ENCODE measurements at regions of chr20 and their contacts with region 1.

Region 1: DNA sequence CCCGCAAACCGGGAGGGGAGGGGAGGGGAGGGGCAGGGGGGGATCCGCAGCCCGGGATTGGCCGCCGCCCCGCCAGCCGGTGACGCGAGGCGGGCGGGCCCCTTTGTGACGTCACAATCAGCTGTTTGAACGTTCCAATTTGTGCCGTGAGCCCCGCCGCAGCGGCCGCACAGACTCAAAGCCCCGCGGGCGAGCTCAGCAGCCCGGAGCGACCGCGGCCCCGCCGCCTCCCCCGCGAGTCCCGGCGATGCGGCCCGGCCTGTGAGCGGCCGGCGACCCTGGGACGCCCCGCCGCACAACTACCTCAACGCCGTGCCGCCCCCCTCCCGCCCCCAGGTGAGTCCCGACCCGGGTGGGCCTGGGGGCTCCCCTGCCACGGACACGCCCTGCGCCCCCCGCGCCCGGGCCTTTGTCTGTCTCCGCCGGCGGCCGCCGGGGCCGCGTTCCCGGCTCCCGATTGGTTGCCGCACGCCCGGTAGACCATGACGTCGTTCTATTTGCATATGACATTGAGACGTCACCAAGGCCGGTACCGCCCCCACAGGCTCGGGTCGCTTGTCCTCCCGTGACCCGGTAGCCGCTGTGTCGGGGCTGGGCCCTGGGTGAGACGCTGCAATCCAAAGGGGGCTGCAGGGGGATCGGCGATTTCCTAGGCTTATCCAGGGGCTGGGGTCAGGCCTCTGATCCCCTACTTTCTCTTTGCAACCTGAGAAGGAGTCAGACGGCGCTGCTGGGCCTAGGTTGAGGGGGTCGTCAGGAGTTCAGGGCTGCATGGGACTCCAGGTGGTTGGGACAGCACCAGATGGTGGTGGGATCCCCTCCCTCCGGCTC is at the start of gene TP53INP2:
- DNase-seq: peak; percentile 74
- ATAC-seq: peak; percentile 61
- H3K4me3 ChIP-seq: peak within 1 kb of the TSS; percentile 57 to 77
- H3K27ac ChIP-seq: peak within 1 kb of the TSS; percentile 52; the same call in 1 of the 2 replicates
- H3K4me1 ChIP-seq: peaks cover 21 to 43% of the 10 kb centered on the region in 2 experiments
- H3K27me3 ChIP-seq: no peaks in the 10 kb centered on the region
- CTCF ChIP-seq: no peak
- POLR2A ChIP-seq: peak; percentile 10
- RAD21 ChIP-seq: no peak
- total RNA-seq, gene TP53INP2: 7.1 TPM

Region 2: GRCh38 chr20:34538671-34539123 is 165.7 kb before region 1 on chr20:
- CTCF ChIA-PET with region 1: interaction called, 5 read pairs
- POLR2A ChIA-PET with region 1: no interaction called
- RAD21 ChIA-PET with region 1: no interaction called
- intact Hi-C with region 1: loop called (anchors 1 kb)
- DNase-seq: no peak
- ATAC-seq: peak; percentile 75
- H3K4me3 ChIP-seq: no peak overlapping the region
- H3K27ac ChIP-seq: no peak overlapping the region
- H3K4me1 ChIP-seq: no peaks in the 10 kb centered on the region
- H3K27me3 ChIP-seq: no peaks in the 10 kb centered on the region
- CTCF ChIP-seq: peak; percentile 49 to 88 (median 88); a peak in 5 of 6 replicates
- POLR2A ChIP-seq: no peak
- RAD21 ChIP-seq: peak; percentile 60; the same call in 1 of the 2 replicates

Region 3: GRCh38 chr20:34579191-34579978 is 125.0 kb before region 1 on chr20:
- CTCF ChIA-PET with region 1: no interaction called
- POLR2A ChIA-PET with region 1: no interaction called
- RAD21 ChIA-PET with region 1: interaction called in 1 of 2 experiments, 3 read pairs
- intact Hi-C with region 1: loop called (anchors 2 kb)
- DNase-seq: peak; percentile 28
- ATAC-seq: peak; percentile 89
- H3K4me3 ChIP-seq: no peak overlapping the region
- H3K27ac ChIP-seq: no peak overlapping the region
- H3K4me1 ChIP-seq: peaks cover 0 to 31% of the 10 kb centered on the region in 2 experiments; a peak in 2 of 4 replicates
- H3K27me3 ChIP-seq: no peaks in the 10 kb centered on the region
- CTCF ChIP-seq: peak; percentile 46 to 60 (median 49); a peak in 5 of 6 replicates
- POLR2A ChIP-seq: no peak
- RAD21 ChIP-seq: peak; percentile 82

Region 4: DNA sequence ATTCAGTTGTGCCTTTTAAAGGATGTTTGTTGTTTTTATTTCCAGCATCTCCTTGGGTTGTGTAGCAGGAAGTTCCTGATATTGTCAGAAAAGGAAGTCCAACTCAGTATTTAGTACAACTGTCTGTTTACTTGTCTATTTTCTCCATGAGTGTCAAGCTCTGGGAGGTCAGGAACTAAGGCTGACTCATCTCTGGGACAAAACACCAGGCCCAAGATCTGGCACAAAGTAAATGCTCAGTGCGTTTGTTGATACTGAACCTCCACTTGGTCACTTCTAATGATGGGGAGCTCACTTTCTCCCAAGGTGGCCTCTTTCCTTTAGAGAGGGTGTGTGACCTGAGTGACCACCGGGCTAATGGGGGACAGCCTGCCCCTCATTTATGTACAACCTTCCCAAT is 14.9 kb before region 1 on chr20:
- CTCF ChIA-PET with region 1: no interaction called
- POLR2A ChIA-PET with region 1: no interaction called
- RAD21 ChIA-PET with region 1: no interaction called
- intact Hi-C with region 1: no loop called
- DNase-seq: no peak
- ATAC-seq: no peak
- H3K4me3 ChIP-seq: no peak overlapping the region
- H3K27ac ChIP-seq: no peak overlapping the region
- H3K4me1 ChIP-seq: no peaks in the 10 kb centered on the region
- H3K27me3 ChIP-seq: no peaks in the 10 kb centered on the region
- CTCF ChIP-seq: no peak
- POLR2A ChIP-seq: no peak
- RAD21 ChIP-seq: no peak

Region 5: DNA sequence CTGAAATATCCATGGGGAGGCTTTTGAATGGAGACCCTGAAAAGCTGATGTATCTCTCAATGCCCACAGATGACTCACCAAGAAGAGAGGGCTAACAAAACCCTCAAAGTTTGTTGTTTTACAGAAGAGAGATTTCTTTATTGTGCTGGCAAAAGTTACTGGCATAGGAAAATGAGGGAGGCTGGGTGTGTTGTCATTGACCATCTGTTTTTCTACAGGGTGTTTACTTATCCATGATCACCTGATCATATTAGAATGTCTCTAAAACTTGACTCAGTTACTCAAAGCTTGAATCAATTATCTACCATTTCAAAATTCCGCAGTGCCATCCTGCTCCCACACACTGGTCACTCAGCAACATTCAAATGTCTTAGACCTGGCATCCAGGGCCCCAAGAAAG is 111.2 kb after region 1 on chr20:
- CTCF ChIA-PET with region 1: no interaction called
- POLR2A ChIA-PET with region 1: no interaction called
- RAD21 ChIA-PET with region 1: no interaction called
- intact Hi-C with region 1: no loop called
- DNase-seq: no peak
- ATAC-seq: no peak
- H3K4me3 ChIP-seq: no peak overlapping the region
- H3K27ac ChIP-seq: no peak overlapping the region
- H3K4me1 ChIP-seq: no peaks in the 10 kb centered on the region
- H3K27me3 ChIP-seq: no peaks in the 10 kb centered on the region
- CTCF ChIP-seq: no peak
- POLR2A ChIP-seq: no peak
- RAD21 ChIP-seq: no peak

Measured in HCT116 (cell line).